ENCODE measurements at regions of chrX and their contacts with region 1.

Region 1: GRCh38 chrX:10259716-10260115 is 102.9 kb downstream of the CLCN4 start:
- DNase-seq: no peak
- H3K4me3 ChIP-seq: no peak overlapping the region
- H3K27ac ChIP-seq: no peak overlapping the region
- H3K4me1 ChIP-seq: no peaks in the 10 kb centered on the region
- H3K27me3 ChIP-seq: peaks cover 0 to 31% of the 10 kb centered on the region in 2 donors
- CTCF ChIP-seq: no peak
- POLR2A ChIP-seq: no peak

Region 2: DNA sequence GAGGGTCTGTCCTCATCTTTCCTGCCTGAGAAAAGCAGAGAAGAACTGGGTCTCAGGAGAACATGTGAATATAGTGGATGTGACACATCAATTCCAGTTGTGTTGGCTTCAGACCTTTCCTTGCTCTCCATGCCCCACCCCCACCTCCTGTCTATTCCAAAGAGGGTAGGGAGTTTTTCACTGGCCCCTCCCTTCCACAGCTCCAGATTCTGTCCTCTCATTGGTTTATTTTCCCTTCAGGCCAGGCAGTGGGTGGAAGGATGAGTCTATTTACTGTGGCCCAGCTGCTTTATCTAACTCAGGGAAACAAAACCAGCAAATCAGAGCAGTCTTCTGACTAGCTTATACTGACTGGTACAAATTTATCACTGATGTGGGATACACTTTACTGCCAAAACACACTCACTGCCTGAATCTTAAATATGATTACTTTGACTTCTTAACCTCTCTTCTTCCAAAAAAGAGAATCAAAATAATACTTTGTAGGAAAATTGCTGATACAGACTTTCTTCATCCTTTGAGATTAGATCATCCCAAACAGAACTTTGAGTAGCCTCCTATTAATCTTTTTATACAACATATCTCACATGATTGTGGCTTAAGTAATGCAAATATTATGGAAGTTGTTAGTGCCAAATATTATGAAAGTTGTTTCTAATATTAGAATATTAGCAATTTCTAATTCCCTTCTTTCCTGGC is 139.5 kb after region 1 on chrX:
- intact Hi-C with region 1: loop called (anchors 5 kb)
- DNase-seq: no peak
- H3K4me3 ChIP-seq: no peak overlapping the region
- H3K27ac ChIP-seq: no peak overlapping the region
- H3K4me1 ChIP-seq: no peaks in the 10 kb centered on the region
- H3K27me3 ChIP-seq: peaks cover 0 to 6% of the 10 kb centered on the region in 2 donors
- CTCF ChIP-seq: no peak
- POLR2A ChIP-seq: no peak

Region 3: GRCh38 chrX:10549280-10549679 is 289.6 kb after region 1 on chrX:
- intact Hi-C with region 1: no loop called
- DNase-seq: no peak
- H3K4me3 ChIP-seq: no peak overlapping the region
- H3K27ac ChIP-seq: no peak overlapping the region
- H3K4me1 ChIP-seq: no peaks in the 10 kb centered on the region
- H3K27me3 ChIP-seq: peaks cover 0 to 6% of the 10 kb centered on the region in 2 donors
- CTCF ChIP-seq: no peak
- POLR2A ChIP-seq: no peak

Measured in breast epithelium (tissue), 4 donors.